Sciatic nerve (tissue), 2 donors: ENCODE measurements at regions of chr16 and their contacts with region 1.

Region 1: GRCh38 chr16:48609652-48610029 is 339 bp downstream of the N4BP1 start:
- DNase-seq: peak; percentile 79
- ATAC-seq: peak; percentile 56

Region 2: GRCh38 chr16:46866286-46866685 is 1743.4 kb before region 1 on chr16:
- intact Hi-C with region 1: loop called (anchors 5 kb)
- DNase-seq: no peak
- ATAC-seq: no peak

Region 3: GRCh38 chr16:48373258-48374029 is 236.2 kb before region 1 on chr16:
- intact Hi-C with region 1: loop called (anchors 10 kb)
- DNase-seq: no peak
- ATAC-seq: peak; percentile 53